Ascending aorta (tissue), 2 donors: ENCODE measurements at regions of chr12 and their contacts with region 1.

Region 1: DNA sequence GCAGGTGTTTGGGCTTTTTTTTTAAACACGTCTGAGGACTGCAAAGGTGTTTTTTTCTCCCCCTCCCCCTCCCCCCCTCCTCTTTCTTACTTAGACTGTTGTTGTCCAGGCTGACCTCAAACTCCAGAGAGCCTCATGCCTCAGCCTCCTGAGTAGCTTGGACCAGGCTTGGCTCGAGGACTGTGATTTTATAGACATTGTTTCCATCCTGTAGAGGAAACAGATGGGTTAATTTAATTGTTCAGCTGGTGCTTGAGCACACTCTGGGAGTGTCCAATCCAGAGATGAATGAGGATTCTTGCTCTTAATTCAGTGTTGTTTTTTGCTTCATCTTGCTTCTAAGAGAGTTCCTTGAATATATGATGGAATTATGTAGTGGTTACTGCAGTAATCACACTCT is 42.1 kb downstream of the RASSF3 start:
- DNase-seq: no peak
- H3K4me3 ChIP-seq: no peak overlapping the region
- H3K27ac ChIP-seq: peak overlapping the region; percentile 84 to 88
- H3K4me1 ChIP-seq: peaks cover 9 to 59% of the 10 kb centered on the region in 2 donors
- H3K27me3 ChIP-seq: no peaks in the 10 kb centered on the region
- CTCF ChIP-seq: no peak

Region 2: GRCh38 chr12:64672925-64673409 is 20.6 kb after region 1 on chr12:
- intact Hi-C with region 1: loop called (anchors 2 kb)
- DNase-seq: peak in 1 of 2 donors; percentile 60
- H3K4me3 ChIP-seq: peak overlapping the region in 1 of 2 donors; percentile 23
- H3K27ac ChIP-seq: peak overlapping the region; percentile 75 to 88
- H3K4me1 ChIP-seq: peaks cover 36 to 81% of the 10 kb centered on the region in 2 donors
- H3K27me3 ChIP-seq: no peaks in the 10 kb centered on the region
- CTCF ChIP-seq: no peak